ENCODE measurements at regions of chr12 and their contacts with region 1.

Region 1: GRCh38 chr12:6927379-6928024 is at the start of gene ATN1:
- DNase-seq: peak in 2 of 3 donors; percentile 58 to 69
- H3K4me3 ChIP-seq: peak within 1 kb of the TSS; percentile 67 to 86 (median 78)
- H3K27ac ChIP-seq: peak within 1 kb of the TSS; percentile 46 to 77
- H3K4me1 ChIP-seq: peaks cover 8 to 61% (median 49%) of the 10 kb centered on the region in 4 experiments
- H3K27me3 ChIP-seq: no peaks in the 10 kb centered on the region

Region 2: GRCh38 chr12:6735448-6736191 is 191.9 kb before region 1 on chr12:
- CTCF ChIA-PET with region 1: no interaction called
- POLR2A ChIA-PET with region 1: no interaction called
- DNase-seq: peak; percentile 59 to 74 (median 72)
- H3K4me3 ChIP-seq: no peak overlapping the region
- H3K27ac ChIP-seq: peak overlapping the region in 1 of 2 experiments; percentile 43
- H3K4me1 ChIP-seq: peaks cover 0 to 5% (median 2%) of the 10 kb centered on the region in 4 experiments
- H3K27me3 ChIP-seq: no peaks in the 10 kb centered on the region

Region 3: DNA sequence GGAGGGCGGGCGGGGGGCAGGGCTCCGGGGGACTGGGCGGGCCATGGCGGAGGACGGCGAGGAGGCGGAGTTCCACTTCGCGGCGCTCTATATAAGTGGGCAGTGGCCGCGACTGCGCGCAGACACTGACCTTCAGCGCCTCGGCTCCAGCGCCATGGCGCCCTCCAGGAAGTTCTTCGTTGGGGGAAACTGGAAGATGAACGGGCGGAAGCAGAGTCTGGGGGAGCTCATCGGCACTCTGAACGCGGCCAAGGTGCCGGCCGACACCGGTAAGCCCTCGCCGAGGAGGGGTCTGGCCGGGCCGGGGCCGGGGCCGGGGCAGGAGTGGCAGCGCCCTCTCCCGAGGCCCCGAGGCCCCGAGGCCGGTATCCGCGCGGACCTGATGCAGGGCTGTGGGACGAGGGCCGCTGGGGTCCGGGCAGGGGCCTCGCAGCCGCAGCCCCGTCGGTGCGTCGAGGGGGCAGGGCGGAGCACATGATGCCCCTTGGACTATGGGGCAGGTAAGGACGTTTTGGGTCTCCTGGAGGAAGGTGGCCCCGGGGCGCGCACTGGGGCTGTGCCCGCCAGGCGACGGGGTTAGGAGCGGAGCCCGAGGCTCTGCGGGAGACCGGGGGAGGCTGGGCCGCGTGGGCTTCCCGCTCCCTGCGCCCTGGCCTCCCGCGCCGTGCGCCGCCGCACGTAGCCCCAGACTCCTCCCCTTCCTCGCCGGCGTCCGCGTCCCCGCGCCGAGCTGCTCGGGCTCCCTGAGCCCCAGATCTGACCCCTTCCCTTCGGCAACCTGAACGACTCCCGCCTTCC is 59.9 kb before region 1 on chr12 and contains the start of gene TPI1:
- CTCF ChIA-PET with region 1: interaction called, 37 read pairs
- POLR2A ChIA-PET with region 1: no interaction called
- DNase-seq: peak in 2 of 3 donors; percentile 30 to 42
- H3K4me3 ChIP-seq: peak within 1 kb of the TSS; percentile 63 to 89 (median 78)
- H3K27ac ChIP-seq: peak within 1 kb of the TSS; percentile 25 to 80
- H3K4me1 ChIP-seq: peaks cover 8 to 55% (median 46%) of the 10 kb centered on the region in 4 experiments
- H3K27me3 ChIP-seq: no peaks in the 10 kb centered on the region

Region 4: GRCh38 chr12:6904280-6905278 is 22.9 kb before region 1 on chr12 and contains the start of gene LRRC23:
- CTCF ChIA-PET with region 1: interaction called, 34 read pairs
- POLR2A ChIA-PET with region 1: no interaction called
- DNase-seq: peak; percentile 96 to 98 (median 97)
- H3K4me3 ChIP-seq: peak within 1 kb of the TSS; percentile 54 to 87 (median 73)
- H3K27ac ChIP-seq: peak within 1 kb of the TSS; percentile 93 to 97
- H3K4me1 ChIP-seq: peaks cover 17 to 39% (median 35%) of the 10 kb centered on the region in 4 experiments
- H3K27me3 ChIP-seq: no peaks in the 10 kb centered on the region

Region 5: GRCh38 chr12:6937481-6938297 is 10.2 kb after region 1 on chr12:
- CTCF ChIA-PET with region 1: interaction called, 124 read pairs
- POLR2A ChIA-PET with region 1: interaction called, 15 read pairs
- DNase-seq: peak; percentile 95 to 98 (median 98)
- H3K4me3 ChIP-seq: peak overlapping the region; percentile 15 to 87 (median 81)
- H3K27ac ChIP-seq: peak overlapping the region; percentile 74 to 86
- H3K4me1 ChIP-seq: peaks cover 0 to 32% (median 28%) of the 10 kb centered on the region in 4 experiments
- H3K27me3 ChIP-seq: no peaks in the 10 kb centered on the region

Region 6: DNA sequence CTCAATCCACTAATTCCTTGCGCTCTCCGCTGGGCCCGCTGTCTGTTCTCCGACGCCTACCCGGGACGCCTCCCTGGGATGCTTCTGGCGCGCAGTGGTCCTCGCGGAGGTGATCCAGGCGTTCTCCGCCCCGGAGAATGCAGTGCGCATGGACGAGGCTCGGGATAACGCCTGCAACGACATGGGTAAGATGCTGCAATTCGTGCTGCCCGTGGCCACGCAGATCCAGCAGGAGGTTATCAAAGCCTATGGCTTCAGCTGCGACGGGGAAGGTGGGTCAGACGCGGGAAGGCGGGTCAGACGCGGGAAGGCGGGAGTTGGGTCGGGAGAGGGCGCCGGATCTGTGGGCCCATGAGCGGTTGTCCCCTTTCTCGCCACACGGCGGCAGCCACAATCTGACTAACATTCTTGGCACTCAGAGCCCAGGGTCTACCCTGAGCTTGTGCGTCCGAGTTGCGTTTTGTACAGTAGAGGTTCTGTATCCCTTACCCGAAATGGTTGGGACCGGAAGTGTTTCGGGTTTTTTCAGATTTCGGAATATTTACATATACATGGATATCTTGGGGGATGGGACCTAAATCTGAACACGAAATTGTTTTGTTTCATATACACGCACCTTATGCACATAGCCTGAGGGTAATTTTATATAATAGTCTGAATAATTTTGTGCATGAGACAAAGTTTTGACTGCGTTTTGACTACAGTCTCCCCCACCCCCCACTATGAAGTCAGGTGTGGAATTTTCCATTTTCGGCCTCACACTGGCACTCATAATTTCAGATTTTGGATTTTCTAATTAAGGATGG is 17.1 kb after region 1 on chr12:
- CTCF ChIA-PET with region 1: interaction called, 124 read pairs
- POLR2A ChIA-PET with region 1: interaction called, 15 read pairs
- DNase-seq: peak; percentile 90 to 94 (median 93)
- H3K4me3 ChIP-seq: peak overlapping the region; percentile 41 to 89 (median 71)
- H3K27ac ChIP-seq: peak overlapping the region; percentile 97 to 99
- H3K4me1 ChIP-seq: peaks cover 3 to 53% (median 48%) of the 10 kb centered on the region in 4 experiments
- H3K27me3 ChIP-seq: no peaks in the 10 kb centered on the region

Region 7: GRCh38 chr12:6965026-6965661 is 37.6 kb after region 1 on chr12:
- CTCF ChIA-PET with region 1: interaction called, 28 read pairs
- POLR2A ChIA-PET with region 1: no interaction called
- DNase-seq: peak; percentile 89 to 94 (median 91)
- H3K4me3 ChIP-seq: no peak overlapping the region
- H3K27ac ChIP-seq: peak overlapping the region in 1 of 2 experiments; percentile 50
- H3K4me1 ChIP-seq: peaks cover 2 to 64% (median 54%) of the 10 kb centered on the region in 4 experiments
- H3K27me3 ChIP-seq: no peaks in the 10 kb centered on the region

Region 8: GRCh38 chr12:7108796-7109571 is 181.5 kb after region 1 on chr12 and contains the start of gene C1RL:
- CTCF ChIA-PET with region 1: interaction called, 12 read pairs
- POLR2A ChIA-PET with region 1: no interaction called
- DNase-seq: peak; percentile 66 to 75 (median 73)
- H3K4me3 ChIP-seq: peak within 1 kb of the TSS; percentile 64 to 96 (median 81)
- H3K27ac ChIP-seq: peak within 1 kb of the TSS; percentile 86 to 89
- H3K4me1 ChIP-seq: peaks cover 0 to 25% (median 21%) of the 10 kb centered on the region in 4 experiments
- H3K27me3 ChIP-seq: no peaks in the 10 kb centered on the region

Measured in common myeloid progenitor, CD34-positive (primary cell).